ENCODE measurements at regions of chr2 and their contacts with region 1.

Region 1: DNA sequence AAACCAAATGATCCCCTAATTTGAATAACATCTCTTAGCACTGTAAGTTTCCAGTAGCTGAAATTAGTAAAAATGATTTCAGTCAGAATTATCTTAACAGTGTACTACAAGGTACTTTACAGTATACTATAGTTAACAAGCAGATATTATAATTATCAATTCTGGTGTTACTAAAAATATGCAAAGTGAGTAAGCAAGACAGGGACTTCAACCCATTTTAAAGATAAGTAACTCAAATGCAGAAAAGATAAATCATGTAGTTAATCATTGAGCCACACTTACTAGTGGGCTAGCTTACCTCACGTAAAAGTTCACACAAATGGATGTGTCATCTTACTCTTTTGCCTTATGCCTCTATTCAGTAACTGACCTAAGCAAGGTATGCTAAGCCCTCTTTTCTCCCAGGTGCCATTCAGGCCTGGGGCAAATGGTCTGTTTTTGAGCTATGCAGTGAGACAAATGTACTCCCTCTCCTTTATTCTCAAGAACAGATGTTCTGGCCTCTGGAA is 101.0 kb downstream of the NBAS start:
- DNase-seq: no peak
- ATAC-seq: no peak

Region 2: DNA sequence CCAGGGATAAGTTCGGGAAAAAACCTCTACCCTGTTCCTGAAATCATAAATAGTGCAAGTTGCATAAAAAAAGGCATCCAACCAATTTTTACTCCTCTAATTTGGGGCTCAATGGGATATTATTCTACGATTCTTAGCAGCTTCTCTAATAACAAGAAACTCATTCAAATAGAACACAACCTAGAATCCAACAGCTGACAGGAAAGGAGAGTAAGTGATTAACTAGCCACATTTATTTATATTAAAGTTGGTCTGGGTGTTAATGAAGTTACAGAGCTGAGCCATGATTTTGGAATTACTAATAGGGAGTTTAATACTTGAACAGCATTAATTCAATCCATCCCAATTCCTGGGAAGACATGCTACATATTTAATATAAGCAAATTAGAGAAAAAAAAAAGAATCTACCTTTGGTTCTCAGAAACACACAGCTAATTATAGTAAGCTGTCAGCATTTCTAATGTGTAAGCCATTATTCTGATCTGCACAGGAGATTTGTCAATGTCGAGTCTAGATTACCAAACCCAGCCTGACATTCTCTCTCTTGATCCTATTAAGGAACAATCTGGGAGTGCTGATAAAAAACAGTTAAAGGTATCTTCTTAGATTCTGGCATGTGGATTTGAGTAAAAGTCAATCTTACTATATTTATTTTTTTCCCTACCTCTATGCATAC is 166.8 kb before region 1 on chr2:
- intact Hi-C with region 1: no loop called
- DNase-seq: no peak
- ATAC-seq: no peak

Region 3: GRCh38 chr2:15609341-15610042 is 149.3 kb after region 1 on chr2:
- intact Hi-C with region 1: loop called (anchors 10 kb)
- DNase-seq: no peak
- ATAC-seq: no peak

Region 4: GRCh38 chr2:15782009-15782751 is 322.0 kb after region 1 on chr2:
- intact Hi-C with region 1: no loop called
- DNase-seq: no peak
- ATAC-seq: no peak